Thyroid gland (tissue), 4 donors: ENCODE measurements at regions of chr2 and their contacts with region 1.

Region 1: DNA sequence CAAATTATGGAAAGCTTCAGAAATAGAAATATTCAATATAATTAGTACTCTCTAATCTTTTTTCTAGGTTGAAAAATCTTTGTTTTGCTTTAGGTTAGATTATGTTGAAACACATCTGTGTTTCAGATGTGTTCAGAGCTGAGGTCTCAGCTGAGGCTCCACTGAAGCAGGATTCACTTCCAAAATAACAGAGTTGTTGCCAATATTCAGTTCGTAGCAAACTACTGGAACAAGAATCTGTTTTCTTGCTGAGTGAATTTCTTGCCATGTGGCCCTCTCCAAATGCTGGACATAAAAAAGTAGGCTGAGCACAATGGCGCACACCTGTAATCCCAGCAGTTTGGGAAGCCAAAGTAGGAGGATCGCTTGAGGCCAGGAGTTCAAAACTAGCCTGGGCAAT is 8.7 kb downstream of the PHOSPHO2 start:
- DNase-seq: no peak
- H3K4me3 ChIP-seq: no peak overlapping the region
- H3K27ac ChIP-seq: no peak overlapping the region
- H3K4me1 ChIP-seq: peaks cover 11 to 13% of the 10 kb centered on the region in 2 donors
- H3K27me3 ChIP-seq: no peaks in the 10 kb centered on the region
- CTCF ChIP-seq: no peak
- POLR2A ChIP-seq: no peak

Region 2: GRCh38 chr2:169159686-169160085 is 543.3 kb before region 1 on chr2:
- intact Hi-C with region 1: no loop called
- DNase-seq: no peak
- H3K4me3 ChIP-seq: no peak overlapping the region
- H3K27ac ChIP-seq: no peak overlapping the region
- H3K4me1 ChIP-seq: no peaks in the 10 kb centered on the region
- H3K27me3 ChIP-seq: no peaks in the 10 kb centered on the region
- CTCF ChIP-seq: no peak
- POLR2A ChIP-seq: no peak

Region 3: GRCh38 chr2:169609264-169609663 is 93.7 kb before region 1 on chr2:
- intact Hi-C with region 1: loop called (anchors 5 kb)
- DNase-seq: no peak
- H3K4me3 ChIP-seq: no peak overlapping the region
- H3K27ac ChIP-seq: no peak overlapping the region
- H3K4me1 ChIP-seq: no peaks in the 10 kb centered on the region
- H3K27me3 ChIP-seq: no peaks in the 10 kb centered on the region
- CTCF ChIP-seq: no peak
- POLR2A ChIP-seq: no peak

Region 4: DNA sequence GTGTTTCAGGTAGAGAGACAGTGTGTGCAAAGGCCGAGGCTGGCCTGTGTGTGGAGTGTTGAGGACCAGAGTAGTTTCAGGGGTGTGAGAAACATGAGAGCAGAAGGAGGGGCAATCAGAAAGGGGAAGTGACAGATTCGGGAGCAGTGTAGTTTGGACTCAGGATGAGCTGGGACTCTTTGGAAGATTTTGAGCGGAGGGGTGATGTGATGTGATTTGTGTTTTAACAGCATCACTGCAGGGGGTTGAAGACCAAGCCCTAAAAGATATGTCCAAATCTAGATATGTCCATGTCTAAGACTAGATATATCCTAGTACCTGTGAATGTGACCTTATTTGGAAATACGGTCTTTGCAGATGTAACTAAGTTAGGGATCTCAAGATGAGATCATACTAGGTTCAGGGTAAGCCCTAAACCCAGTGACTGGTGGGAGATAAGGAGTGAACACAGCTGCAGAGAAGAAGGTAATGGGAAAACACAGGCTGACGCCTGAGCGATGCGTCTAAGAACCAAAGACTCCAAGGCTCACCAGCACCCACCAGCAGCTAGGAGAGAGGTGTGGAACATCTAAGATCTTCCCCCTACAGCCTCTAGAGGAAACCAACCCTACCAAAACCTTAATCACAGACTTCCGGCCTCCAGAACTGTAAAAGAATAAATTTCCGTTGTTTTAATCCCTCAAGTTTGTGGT is 436.4 kb after region 1 on chr2:
- intact Hi-C with region 1: no loop called
- DNase-seq: no peak
- H3K4me3 ChIP-seq: no peak overlapping the region
- H3K27ac ChIP-seq: no peak overlapping the region
- H3K4me1 ChIP-seq: peaks cover 0 to under 1% of the 10 kb centered on the region in 2 donors
- H3K27me3 ChIP-seq: no peaks in the 10 kb centered on the region
- CTCF ChIP-seq: no peak
- POLR2A ChIP-seq: no peak